HCT116 (cell line): ENCODE measurements at regions of chr6 and their contacts with region 1.

Region 1: GRCh38 chr6:30775104-30775503 is 30.8 kb upstream of the IER3 start:
- DNase-seq: no peak
- ATAC-seq: 0 out of 2 replicates have a peak, but pooled peaks have one; percentile 4
- H3K4me3 ChIP-seq: no peak overlapping the region
- H3K27ac ChIP-seq: no peak overlapping the region; the same call in 1 of the 2 replicates
- H3K4me1 ChIP-seq: peaks cover 62 to 78% of the 10 kb centered on the region in 2 experiments
- H3K27me3 ChIP-seq: no peaks in the 10 kb centered on the region
- CTCF ChIP-seq: no peak
- POLR2A ChIP-seq: no peak
- RAD21 ChIP-seq: no peak

Region 2: GRCh38 chr6:30752157-30752927 is 22.8 kb before region 1 on chr6:
- CTCF ChIA-PET with region 1: no interaction called
- POLR2A ChIA-PET with region 1: interaction called, 195 read pairs
- RAD21 ChIA-PET with region 1: interaction called, 5 read pairs
- intact Hi-C with region 1: no loop called
- DNase-seq: peak; percentile 99
- ATAC-seq: peak; percentile 82
- H3K4me3 ChIP-seq: no peak overlapping the region
- H3K27ac ChIP-seq: peak overlapping the region; percentile 96
- H3K4me1 ChIP-seq: peaks cover 76 to 97% of the 10 kb centered on the region in 2 experiments
- H3K27me3 ChIP-seq: no peaks in the 10 kb centered on the region
- CTCF ChIP-seq: no peak
- POLR2A ChIP-seq: no peak
- RAD21 ChIP-seq: no peak